GM12878 (cell line): ENCODE measurements at regions of chr2 and their contacts with region 1.

Region 1: GRCh38 chr2:230614913-230615332 is 97.7 kb upstream of the CAB39 start:
- DNase-seq: peak; percentile 85
- ATAC-seq: peak; percentile 88
- H3K4me3 ChIP-seq: peak overlapping the region; percentile 53; the same call in 1 of the 2 replicates
- H3K27ac ChIP-seq: peak overlapping the region; percentile 60
- H3K4me1 ChIP-seq: peaks cover 22% of the 10 kb centered on the region
- H3K27me3 ChIP-seq: no peaks in the 10 kb centered on the region
- CTCF ChIP-seq: peak in 1 of 3 experiments; percentile 13; a peak in 1 of 6 replicates
- EP300 ChIP-seq: no peak
- POLR2A ChIP-seq: peak; percentile 45; the same call in 1 of the 2 replicates
- RAD21 ChIP-seq: peak; percentile 44; the same call in 1 of the 2 replicates

Region 2: GRCh38 chr2:229780856-229781773 is 833.8 kb before region 1 on chr2:
- CTCF ChIA-PET with region 1: no interaction called
- POLR2A ChIA-PET with region 1: no interaction called
- RAD21 ChIA-PET with region 1: no interaction called
- SMC1A ChIA-PET with region 1: no interaction called
- in situ Hi-C with region 1: no loop called
- intact Hi-C with region 1: loop called (anchors 10 kb)
- DNase-seq: no peak
- ATAC-seq: peak; percentile 82
- H3K4me3 ChIP-seq: no peak overlapping the region
- H3K27ac ChIP-seq: no peak overlapping the region
- H3K4me1 ChIP-seq: peaks cover 20% of the 10 kb centered on the region
- H3K27me3 ChIP-seq: no peaks in the 10 kb centered on the region
- CTCF ChIP-seq: peak; percentile 81 to 91 (median 84)
- EP300 ChIP-seq: no peak
- POLR2A ChIP-seq: no peak
- RAD21 ChIP-seq: peak; percentile 63

Region 3: GRCh38 chr2:229993236-229993635 is 621.7 kb before region 1 on chr2:
- CTCF ChIA-PET with region 1: no interaction called
- POLR2A ChIA-PET with region 1: no interaction called
- RAD21 ChIA-PET with region 1: no interaction called
- SMC1A ChIA-PET with region 1: no interaction called
- in situ Hi-C with region 1: no loop called
- intact Hi-C with region 1: no loop called
- DNase-seq: no peak
- ATAC-seq: no peak
- H3K4me3 ChIP-seq: no peak overlapping the region
- H3K27ac ChIP-seq: no peak overlapping the region
- H3K4me1 ChIP-seq: no peaks in the 10 kb centered on the region
- H3K27me3 ChIP-seq: no peaks in the 10 kb centered on the region
- CTCF ChIP-seq: no peak
- EP300 ChIP-seq: no peak
- POLR2A ChIP-seq: no peak
- RAD21 ChIP-seq: no peak

Region 4: DNA sequence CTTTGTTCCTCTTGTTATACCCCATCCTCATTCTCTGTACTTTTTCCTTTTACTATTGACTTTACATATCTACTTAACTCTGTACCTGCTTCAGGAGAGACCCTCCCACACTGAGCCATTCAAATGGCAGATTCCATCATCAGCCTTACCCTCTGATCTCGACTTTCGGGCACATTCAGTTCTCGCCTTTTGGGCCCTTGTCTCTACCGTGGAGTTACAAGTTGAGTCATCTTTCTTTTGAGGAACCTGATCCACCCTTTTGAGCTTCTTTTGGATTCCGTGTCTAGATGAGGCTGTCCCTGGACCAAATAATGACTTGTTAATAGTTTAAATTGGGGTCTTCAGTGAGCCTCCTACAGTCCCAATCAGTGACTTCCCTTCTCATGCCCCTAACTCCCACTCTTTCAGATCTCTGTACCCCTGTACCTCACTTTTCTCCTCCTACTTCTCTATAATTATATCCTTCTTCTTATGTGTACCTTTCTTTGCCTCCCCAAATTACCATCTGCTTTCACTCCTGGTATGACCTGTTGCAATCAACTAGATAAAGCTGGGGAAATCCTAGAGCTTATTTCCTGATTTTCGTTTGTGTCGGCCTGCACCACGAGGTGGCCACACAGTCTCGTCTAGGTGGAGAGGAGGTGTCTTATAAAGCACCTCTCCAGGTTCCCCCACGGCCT is 412.4 kb before region 1 on chr2:
- CTCF ChIA-PET with region 1: interaction called, 25 read pairs
- POLR2A ChIA-PET with region 1: no interaction called
- RAD21 ChIA-PET with region 1: interaction called, 32 read pairs
- SMC1A ChIA-PET with region 1: interaction called, 35 read pairs
- in situ Hi-C with region 1: no loop called
- intact Hi-C with region 1: loop called (anchors 2 kb)
- DNase-seq: peak; percentile 60
- ATAC-seq: peak; percentile 77
- H3K4me3 ChIP-seq: 0 out of 2 replicates have a peak overlapping the region, but pooled peaks have one; percentile 2
- H3K27ac ChIP-seq: peak overlapping the region; percentile 39
- H3K4me1 ChIP-seq: peaks cover 48% of the 10 kb centered on the region
- H3K27me3 ChIP-seq: no peaks in the 10 kb centered on the region
- CTCF ChIP-seq: peak; percentile 40 to 77 (median 44); a peak in 4 of 6 replicates
- EP300 ChIP-seq: no peak
- POLR2A ChIP-seq: no peak
- RAD21 ChIP-seq: peak; percentile 76

Region 5: GRCh38 chr2:230411570-230412370 is 203.2 kb before region 1 on chr2:
- CTCF ChIA-PET with region 1: interaction called, 3 read pairs
- POLR2A ChIA-PET with region 1: no interaction called
- RAD21 ChIA-PET with region 1: interaction called, 9 read pairs
- SMC1A ChIA-PET with region 1: interaction called, 13 read pairs
- in situ Hi-C with region 1: no loop called
- intact Hi-C with region 1: loop called (anchors 2 kb)
- DNase-seq: no peak
- ATAC-seq: peak; percentile 77
- H3K4me3 ChIP-seq: peak overlapping the region; percentile 77
- H3K27ac ChIP-seq: peak overlapping the region; percentile 79
- H3K4me1 ChIP-seq: peaks cover 35% of the 10 kb centered on the region
- H3K27me3 ChIP-seq: no peaks in the 10 kb centered on the region
- CTCF ChIP-seq: no peak
- EP300 ChIP-seq: no peak
- POLR2A ChIP-seq: peak; percentile 84
- RAD21 ChIP-seq: no peak

Region 6: GRCh38 chr2:230496891-230497290 is 118.0 kb before region 1 on chr2:
- CTCF ChIA-PET with region 1: no interaction called
- POLR2A ChIA-PET with region 1: no interaction called
- RAD21 ChIA-PET with region 1: no interaction called
- SMC1A ChIA-PET with region 1: no interaction called
- in situ Hi-C with region 1: no loop called
- intact Hi-C with region 1: no loop called
- DNase-seq: no peak
- ATAC-seq: peak; percentile 41
- H3K4me3 ChIP-seq: no peak overlapping the region
- H3K27ac ChIP-seq: peak overlapping the region; percentile 23; the same call in 1 of the 2 replicates
- H3K4me1 ChIP-seq: peaks cover 10% of the 10 kb centered on the region; the same call in 1 of the 2 replicates
- H3K27me3 ChIP-seq: no peaks in the 10 kb centered on the region
- CTCF ChIP-seq: no peak
- EP300 ChIP-seq: no peak
- POLR2A ChIP-seq: no peak
- RAD21 ChIP-seq: no peak

Region 7: DNA sequence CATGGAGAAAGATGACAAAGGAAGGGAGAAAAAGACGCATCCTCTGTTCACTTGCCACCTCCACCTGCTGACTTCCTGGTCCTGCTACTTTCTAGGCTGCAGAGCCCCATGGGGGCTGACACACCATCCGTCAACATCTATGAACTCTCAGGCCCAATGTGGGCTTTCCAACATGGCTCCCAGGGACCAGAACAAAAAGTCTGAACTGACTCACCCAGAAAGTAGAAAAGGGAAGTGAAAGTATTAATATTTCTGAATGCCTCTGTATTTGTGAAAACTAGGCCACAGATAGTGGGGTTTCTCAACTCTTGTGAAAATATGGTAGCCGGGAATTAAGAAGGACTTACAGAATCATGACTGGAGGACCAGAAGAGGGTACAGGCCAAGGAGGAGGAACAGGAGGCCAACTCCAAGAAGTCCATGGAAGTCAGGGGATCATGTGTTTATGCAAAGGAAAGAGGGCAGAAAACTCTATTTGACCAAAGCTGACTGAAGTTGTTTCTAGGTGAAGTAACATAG is 25.4 kb before region 1 on chr2:
- CTCF ChIA-PET with region 1: interaction called, 13 read pairs
- POLR2A ChIA-PET with region 1: no interaction called
- RAD21 ChIA-PET with region 1: interaction called, 7 read pairs
- SMC1A ChIA-PET with region 1: interaction called, 17 read pairs
- in situ Hi-C with region 1: no loop called
- intact Hi-C with region 1: no loop called
- DNase-seq: peak; percentile 98
- ATAC-seq: peak; percentile 90
- H3K4me3 ChIP-seq: no peak overlapping the region
- H3K27ac ChIP-seq: peak overlapping the region; percentile 96
- H3K4me1 ChIP-seq: peaks cover 62% of the 10 kb centered on the region
- H3K27me3 ChIP-seq: no peaks in the 10 kb centered on the region
- CTCF ChIP-seq: 0 out of 6 replicates have a peak, but pooled peaks of 1 of the 3 experiments have one; percentile 3
- EP300 ChIP-seq: peak; percentile 91 to 98
- POLR2A ChIP-seq: peak; percentile 77
- RAD21 ChIP-seq: peak; percentile 38; the same call in 1 of the 2 replicates

Region 8: DNA sequence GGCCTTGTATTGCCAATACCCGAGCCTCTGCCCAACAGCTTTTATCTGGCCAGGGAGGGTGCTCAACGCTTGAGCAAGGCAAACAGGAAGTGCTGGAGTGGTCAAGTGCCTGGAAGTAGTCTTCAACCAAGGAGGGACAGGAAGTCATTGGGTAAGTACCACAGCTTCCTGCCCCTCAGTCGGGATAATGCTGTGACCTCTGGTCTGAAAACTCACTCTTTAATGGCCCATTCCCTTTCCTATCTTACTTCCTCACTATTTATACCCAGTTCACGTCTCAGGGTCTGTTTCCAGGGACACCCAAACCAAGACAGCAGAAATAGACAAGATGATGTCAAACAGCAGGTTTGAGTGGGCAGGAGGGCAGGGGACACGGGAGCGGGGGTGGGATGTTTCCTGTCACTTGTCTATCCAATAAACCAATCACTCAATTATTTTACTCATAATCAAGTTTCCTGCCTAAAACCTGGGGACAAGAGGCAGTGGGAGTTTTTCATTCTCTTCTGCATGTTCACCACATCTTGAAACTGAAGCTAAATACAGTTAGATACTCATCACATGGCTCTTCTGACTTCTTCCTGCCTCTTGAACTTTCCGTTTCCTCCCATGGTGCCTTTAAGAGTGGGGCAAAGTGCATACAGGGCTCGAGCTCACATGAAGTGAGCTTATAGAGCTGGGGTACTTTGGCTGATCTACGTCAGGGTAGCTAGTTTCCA is 28.8 kb after region 1 on chr2:
- CTCF ChIA-PET with region 1: interaction called, 5 read pairs
- POLR2A ChIA-PET with region 1: interaction called, 5 read pairs
- RAD21 ChIA-PET with region 1: interaction called, 23 read pairs
- SMC1A ChIA-PET with region 1: interaction called, 16 read pairs
- in situ Hi-C with region 1: no loop called
- intact Hi-C with region 1: no loop called
- DNase-seq: no peak
- ATAC-seq: peak; percentile 88
- H3K4me3 ChIP-seq: no peak overlapping the region
- H3K27ac ChIP-seq: peak overlapping the region; percentile 60
- H3K4me1 ChIP-seq: peaks cover 18% of the 10 kb centered on the region
- H3K27me3 ChIP-seq: no peaks in the 10 kb centered on the region
- CTCF ChIP-seq: no peak
- EP300 ChIP-seq: peak in 1 of 2 experiments; percentile 26; a peak in 1 of 4 replicates
- POLR2A ChIP-seq: no peak
- RAD21 ChIP-seq: no peak

Region 9: DNA sequence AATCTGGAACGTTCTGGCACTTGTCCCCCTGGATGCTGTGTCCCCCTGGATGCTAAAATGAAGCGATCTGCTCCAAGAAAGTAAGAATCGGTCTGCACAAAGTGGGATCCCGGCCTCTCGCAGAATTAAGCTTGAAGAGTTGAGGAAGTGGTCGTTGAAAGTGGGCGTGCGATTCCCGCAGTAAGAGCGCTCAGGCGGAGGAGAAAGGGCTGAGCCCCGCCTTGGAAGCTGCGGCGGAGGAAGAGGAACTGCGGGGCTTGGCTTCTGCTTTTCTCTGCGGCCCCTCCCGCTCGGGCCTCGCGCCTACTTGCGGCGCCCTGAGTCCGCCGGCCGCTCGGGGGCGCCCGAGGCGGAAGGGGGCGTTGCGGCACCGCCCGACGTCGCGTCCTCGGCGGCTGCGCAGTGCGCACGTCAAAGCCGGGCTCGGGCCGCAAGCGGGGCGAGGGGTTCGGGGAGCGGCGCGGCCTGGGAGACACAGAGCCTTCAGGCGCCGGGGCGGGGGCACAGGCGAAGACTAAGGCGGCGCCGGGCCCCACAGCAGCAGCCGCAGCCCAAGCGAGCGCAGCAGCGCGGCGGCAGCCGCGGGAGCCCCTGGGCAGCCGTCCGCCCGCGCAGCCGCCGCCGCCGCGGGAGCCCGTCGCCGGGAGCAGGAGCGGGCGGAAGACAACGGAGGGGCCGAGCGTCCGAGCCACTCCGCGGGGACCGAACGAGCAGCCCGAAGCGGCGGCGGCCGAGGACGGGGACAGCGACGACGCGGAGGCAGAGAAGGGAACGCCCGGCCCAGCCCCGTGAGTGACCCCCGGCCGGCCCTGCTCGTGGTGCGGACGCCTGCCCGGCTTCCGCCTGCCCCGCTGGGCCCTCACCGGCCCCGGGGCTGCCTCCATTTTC is 97.8 kb after region 1 on chr2 and contains the start of gene CAB39:
- CTCF ChIA-PET with region 1: interaction called, 13 read pairs
- POLR2A ChIA-PET with region 1: interaction called, 10 read pairs
- RAD21 ChIA-PET with region 1: interaction called, 30 read pairs
- SMC1A ChIA-PET with region 1: interaction called, 23 read pairs
- in situ Hi-C with region 1: no loop called
- intact Hi-C with region 1: loop called (anchors 2 kb)
- DNase-seq: peak; percentile 63
- ATAC-seq: peak; percentile 87
- H3K4me3 ChIP-seq: peak within 1 kb of the TSS; percentile 100
- H3K27ac ChIP-seq: peak within 1 kb of the TSS; percentile 85
- H3K4me1 ChIP-seq: peaks cover 6% of the 10 kb centered on the region
- H3K27me3 ChIP-seq: no peaks in the 10 kb centered on the region
- CTCF ChIP-seq: peak; percentile 74 to 94 (median 76); a peak in 4 of 6 replicates
- EP300 ChIP-seq: peak; percentile 27 to 29; a peak in 1 of 4 replicates
- POLR2A ChIP-seq: peak; percentile 80
- RAD21 ChIP-seq: peak; percentile 56
- polyA plus RNA-seq, gene CAB39: 37.2 to 42.8 TPM